Activated CD8-positive, alpha-beta T cell treated with anti-CD3 and anti-CD28 coated beads for 36 hours (primary cell): ENCODE measurements at regions of chr21 and their contacts with region 1.

Region 1: GRCh38 chr21:43646550-43647260 is 12.6 kb downstream of the HSF2BP start:
- DNase-seq: peak; percentile 88
- ATAC-seq: peak; percentile 100
- H3K4me3 Mint-ChIP-seq: no peak overlapping the region
- H3K27ac Mint-ChIP-seq: no peak overlapping the region
- H3K4me1 Mint-ChIP-seq: peaks cover 17% of the 10 kb centered on the region
- H3K27me3 Mint-ChIP-seq: peaks cover 7% of the 10 kb centered on the region
- CTCF ChIP-seq: peak; percentile 99

Region 2: DNA sequence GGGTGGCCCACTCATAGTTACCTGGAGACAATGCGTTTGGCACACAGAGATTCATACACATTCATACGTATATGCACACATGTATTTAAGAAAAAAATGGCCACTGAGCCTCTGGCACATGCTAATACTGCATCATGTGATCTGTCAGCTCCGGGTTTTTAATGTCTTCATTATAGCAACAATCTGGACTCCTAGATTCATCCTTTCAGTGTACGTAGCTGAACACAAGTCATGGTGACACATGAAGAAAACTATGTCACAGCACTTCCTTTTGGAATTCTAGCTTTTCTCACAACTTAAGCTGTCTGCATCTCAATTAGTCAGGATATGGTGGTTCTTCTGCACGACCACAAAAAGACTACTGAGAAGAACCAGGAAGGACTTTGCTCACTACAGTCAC is 12.1 kb before region 1 on chr21:
- CTCF ChIA-PET with region 1: interaction called, 12 read pairs
- POLR2A ChIA-PET with region 1: no interaction called
- intact Hi-C with region 1: no loop called
- DNase-seq: no peak
- ATAC-seq: no peak
- H3K4me3 Mint-ChIP-seq: no peak overlapping the region
- H3K27ac Mint-ChIP-seq: no peak overlapping the region
- H3K4me1 Mint-ChIP-seq: peaks cover 3% of the 10 kb centered on the region
- H3K27me3 Mint-ChIP-seq: no peaks in the 10 kb centered on the region
- CTCF ChIP-seq: no peak